ENCODE measurements at regions of chr4 and their contacts with region 1.

Region 1: DNA sequence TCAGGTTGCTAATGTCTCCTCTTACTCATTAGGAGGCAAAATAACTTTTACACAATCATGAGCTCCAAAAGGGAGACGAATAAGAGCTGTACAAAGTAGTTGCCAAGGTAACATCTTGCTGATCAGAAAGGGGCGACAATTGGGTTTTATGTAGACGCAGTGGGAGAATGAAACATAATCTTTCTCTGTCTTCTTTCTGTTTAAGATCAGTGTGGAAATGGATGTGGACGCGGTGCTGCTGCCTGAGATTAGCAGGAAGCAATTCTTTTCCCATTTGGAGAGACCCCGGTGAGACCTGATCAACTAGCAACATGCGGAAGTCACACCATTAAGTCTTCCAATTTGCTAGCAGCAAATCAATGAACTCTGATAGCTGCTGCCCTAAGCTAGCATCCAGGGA is 90.7 kb upstream of the IGFBP7 start:
- DNase-seq: no peak
- H3K4me3 ChIP-seq: no peak overlapping the region
- H3K27ac ChIP-seq: no peak overlapping the region
- H3K27me3 ChIP-seq: peaks cover 4% of the 10 kb centered on the region
- CTCF ChIP-seq: no peak

Region 2: DNA sequence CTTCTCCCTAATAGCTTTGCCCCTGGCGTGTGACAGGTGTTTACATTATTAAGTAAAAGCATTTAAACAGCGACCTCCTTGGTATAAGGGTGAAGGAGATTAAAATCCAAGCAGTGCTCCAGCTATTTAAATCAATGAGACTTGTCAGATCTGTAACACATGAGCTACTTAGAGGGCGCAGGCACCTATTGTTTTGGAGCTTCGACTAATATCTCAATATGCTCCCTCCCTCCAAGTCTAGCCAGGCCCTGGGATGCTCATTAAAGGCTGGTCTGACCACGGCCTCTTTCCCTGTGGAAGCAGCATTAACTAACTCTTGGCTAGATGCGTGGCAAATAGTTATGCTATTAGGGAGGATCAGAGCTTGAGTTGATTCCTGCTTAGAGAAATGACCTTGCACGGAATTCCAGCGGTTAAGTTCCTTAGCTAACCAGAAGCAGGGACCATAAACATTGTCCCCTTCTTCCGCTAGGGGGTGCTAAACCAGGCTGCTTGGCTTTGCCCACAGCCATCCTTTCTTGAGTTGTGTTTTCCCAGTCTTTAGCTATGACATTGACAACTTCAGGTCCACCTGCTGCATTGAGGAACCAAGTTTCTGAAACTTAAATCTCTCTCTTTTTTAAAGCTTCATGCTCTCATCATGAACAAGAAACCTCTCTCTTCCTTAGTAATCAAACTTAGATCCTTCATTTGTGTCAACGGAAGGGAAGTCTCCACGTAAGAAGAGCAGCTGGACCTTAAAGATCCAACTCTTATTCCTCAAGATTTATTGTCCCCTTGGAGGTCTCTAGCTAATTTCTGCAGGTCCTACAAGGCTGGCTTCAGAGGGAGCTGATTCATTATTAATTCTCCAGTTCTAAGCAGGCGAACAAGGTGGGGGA is 10.1 kb before region 1 on chr4:
- CTCF ChIA-PET with region 1: interaction called, 25 read pairs
- POLR2A ChIA-PET with region 1: no interaction called
- DNase-seq: no peak
- H3K4me3 ChIP-seq: no peak overlapping the region
- H3K27ac ChIP-seq: no peak overlapping the region
- H3K27me3 ChIP-seq: peaks cover 6% of the 10 kb centered on the region
- CTCF ChIP-seq: peak; percentile 57

Measured in AG04450 (cell line).